AG04450 (cell line): ENCODE measurements at regions of chr11 and their contacts with region 1.

Region 1: GRCh38 chr11:131694526-131695424 is 324.4 kb downstream of the NTM start:
- DNase-seq: peak; percentile 44
- H3K4me3 ChIP-seq: peak overlapping the region; percentile 17; the same call in 1 of the 2 replicates
- H3K27ac ChIP-seq: no peak overlapping the region
- H3K27me3 ChIP-seq: no peaks in the 10 kb centered on the region
- CTCF ChIP-seq: peak; percentile 95

Region 2: GRCh38 chr11:131378931-131379330 is 315.8 kb before region 1 on chr11:
- CTCF ChIA-PET with region 1: no interaction called
- POLR2A ChIA-PET with region 1: no interaction called
- DNase-seq: no peak
- H3K4me3 ChIP-seq: no peak overlapping the region
- H3K27ac ChIP-seq: no peak overlapping the region
- H3K27me3 ChIP-seq: peaks cover 2% of the 10 kb centered on the region
- CTCF ChIP-seq: no peak

Region 3: DNA sequence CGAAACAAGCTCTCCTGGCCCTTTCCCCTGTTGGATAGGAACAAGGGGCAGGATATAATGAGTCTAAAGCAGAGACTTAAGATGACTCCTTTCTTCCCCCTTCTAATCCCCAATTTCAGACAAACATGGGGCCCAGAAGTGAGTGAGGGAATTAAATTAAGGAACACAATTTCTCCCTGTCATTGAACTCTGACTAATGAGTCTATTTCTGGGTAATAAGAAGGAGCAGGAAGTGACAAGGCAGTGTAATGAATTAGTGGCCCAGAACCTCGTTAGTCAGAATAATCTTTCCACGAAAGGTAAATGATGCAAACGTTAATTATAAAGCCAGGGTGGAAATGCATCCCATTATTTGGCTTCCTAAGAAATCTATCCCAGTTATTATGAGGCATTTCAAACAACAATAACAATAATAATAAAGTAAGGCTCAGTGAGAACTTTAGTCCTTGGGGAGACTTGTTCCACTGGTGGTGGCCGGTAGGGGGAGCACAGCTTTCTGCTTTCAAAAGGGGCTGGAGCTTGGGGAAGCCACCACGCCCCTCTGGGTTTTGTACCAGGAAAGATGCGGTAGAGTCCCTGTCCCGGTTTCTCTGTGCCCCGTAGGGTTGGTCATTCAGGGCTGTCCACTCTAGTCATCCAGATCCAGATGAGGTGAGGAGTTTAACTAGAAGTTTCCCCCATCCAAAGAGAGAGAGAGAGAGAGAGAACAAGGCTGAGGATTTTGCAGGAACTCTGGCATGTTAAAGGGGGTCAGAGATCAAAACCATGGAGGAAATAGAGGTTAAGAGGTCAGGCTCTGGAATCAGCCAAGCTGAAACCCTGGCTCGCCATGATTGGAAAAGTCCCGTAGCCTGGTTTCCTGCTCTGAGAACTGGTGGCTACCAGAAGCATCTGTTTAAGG is 26.0 kb before region 1 on chr11:
- CTCF ChIA-PET with region 1: interaction called, 70 read pairs
- POLR2A ChIA-PET with region 1: no interaction called
- DNase-seq: no peak
- H3K4me3 ChIP-seq: no peak overlapping the region
- H3K27ac ChIP-seq: no peak overlapping the region
- H3K27me3 ChIP-seq: no peaks in the 10 kb centered on the region
- CTCF ChIP-seq: peak; percentile 66

Region 4: DNA sequence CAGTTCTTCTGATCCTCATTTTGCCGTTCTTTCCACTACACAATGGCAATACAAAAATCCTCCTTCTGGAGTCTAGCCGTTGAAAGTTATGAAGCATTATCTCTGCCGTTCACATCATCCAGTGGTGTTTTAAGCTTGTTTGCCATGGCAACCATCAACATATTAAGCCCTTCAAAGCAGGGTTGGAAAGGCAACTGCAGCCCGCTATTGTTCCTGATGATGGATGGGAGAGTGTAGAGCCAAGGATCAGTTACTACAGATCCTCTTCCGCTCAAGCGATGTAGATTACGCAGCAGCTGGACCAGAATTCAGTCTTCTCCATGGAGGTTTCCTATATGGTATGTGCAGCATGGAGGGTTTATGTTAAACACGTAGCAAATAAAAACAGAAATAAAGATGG is 28.3 kb after region 1 on chr11:
- CTCF ChIA-PET with region 1: interaction called, 15 read pairs
- POLR2A ChIA-PET with region 1: no interaction called
- DNase-seq: no peak
- H3K4me3 ChIP-seq: no peak overlapping the region
- H3K27ac ChIP-seq: no peak overlapping the region
- H3K27me3 ChIP-seq: peaks cover 23% of the 10 kb centered on the region
- CTCF ChIP-seq: no peak

Region 5: DNA sequence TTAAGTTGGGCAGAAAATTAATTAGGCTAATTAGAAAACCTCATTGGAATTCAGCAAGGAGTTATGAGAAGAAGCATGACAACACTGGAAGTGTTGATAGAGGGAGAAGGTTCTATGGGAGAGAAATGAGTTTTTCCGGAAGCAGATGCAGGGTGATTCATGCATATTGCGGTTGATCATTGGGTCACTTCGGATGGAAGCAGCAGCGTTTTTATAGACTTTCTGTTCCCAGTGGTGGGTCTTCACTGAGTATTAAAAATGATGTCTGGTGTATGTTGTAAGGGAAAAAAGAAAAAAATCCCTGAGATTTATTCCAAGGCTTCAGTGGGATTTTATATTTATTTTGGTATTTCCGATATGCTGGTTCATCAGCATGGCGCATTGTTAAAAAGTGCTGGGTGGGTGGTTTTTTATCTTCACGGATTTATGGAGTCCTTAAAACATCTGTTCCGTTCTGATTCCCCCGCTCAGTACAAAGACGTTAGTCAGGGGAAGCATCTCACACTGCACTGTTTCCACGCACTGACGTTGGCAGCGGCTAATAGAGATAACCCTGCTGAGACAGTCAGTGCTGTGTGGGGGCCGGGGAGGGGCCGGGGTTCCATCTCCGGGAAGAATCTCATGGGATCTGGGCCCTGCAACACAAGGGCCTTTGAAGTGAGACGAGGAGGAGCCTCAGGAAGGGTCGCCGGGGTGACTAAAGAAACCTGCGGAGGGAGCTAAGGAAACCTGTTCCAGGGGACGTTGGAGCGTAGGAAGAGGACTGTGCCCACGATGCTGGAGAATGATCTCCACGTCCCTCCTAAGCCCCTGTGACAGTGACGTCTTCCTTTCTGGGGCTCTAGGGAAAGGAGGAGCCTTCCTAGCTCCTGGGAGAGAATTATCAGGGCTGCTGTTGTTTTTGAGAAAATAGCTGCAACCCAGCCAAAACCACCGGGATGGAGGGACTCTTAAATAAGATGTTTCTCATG is 65.6 kb after region 1 on chr11:
- CTCF ChIA-PET with region 1: interaction called, 28 read pairs
- POLR2A ChIA-PET with region 1: no interaction called
- DNase-seq: no peak
- H3K4me3 ChIP-seq: no peak overlapping the region
- H3K27ac ChIP-seq: peak overlapping the region; percentile 42
- H3K27me3 ChIP-seq: no peaks in the 10 kb centered on the region
- CTCF ChIP-seq: no peak

Region 6: DNA sequence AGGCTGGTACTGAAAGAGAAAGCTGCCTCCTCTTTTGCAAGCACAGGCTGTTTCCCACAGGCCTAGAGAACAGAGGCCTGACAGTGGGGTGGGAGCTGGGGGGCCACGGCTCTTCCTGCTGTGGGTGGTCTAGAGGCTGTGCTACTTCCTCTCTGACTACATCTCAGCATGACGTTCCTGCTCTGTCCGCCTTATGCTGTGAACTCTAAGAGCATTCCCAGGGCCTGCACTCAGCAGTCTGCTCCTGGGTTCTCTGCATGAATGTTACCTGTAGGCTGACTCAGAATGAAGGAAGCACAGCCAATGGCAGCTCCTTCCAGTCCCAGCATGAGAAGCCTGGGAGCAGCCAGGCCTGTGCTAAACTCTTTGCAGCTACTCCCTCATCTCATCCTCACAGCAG is 210.0 kb after region 1 on chr11:
- CTCF ChIA-PET with region 1: interaction called, 19 read pairs
- POLR2A ChIA-PET with region 1: no interaction called
- DNase-seq: no peak
- H3K4me3 ChIP-seq: no peak overlapping the region
- H3K27ac ChIP-seq: no peak overlapping the region
- H3K27me3 ChIP-seq: no peaks in the 10 kb centered on the region
- CTCF ChIP-seq: no peak

Region 7: DNA sequence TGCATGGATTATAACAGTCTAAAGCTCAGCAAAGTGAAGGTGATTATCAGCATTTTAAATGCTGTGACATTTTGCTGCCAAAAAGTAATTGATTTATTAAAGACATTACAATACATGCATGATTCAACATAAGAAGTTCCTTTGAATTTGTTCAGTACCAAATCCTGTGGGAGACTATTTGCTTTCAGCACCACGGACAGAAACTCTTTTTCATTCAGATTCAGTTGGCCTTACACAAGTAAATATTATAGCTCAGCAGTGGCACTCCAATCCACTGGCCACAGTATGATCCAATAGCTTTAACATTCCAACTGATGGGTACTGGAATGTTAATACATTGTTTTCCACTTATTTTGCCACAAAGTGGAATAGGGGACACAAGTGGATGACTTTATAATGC is 482.3 kb after region 1 on chr11:
- CTCF ChIA-PET with region 1: no interaction called
- POLR2A ChIA-PET with region 1: no interaction called
- DNase-seq: peak; percentile 27
- H3K4me3 ChIP-seq: no peak overlapping the region
- H3K27ac ChIP-seq: no peak overlapping the region
- H3K27me3 ChIP-seq: no peaks in the 10 kb centered on the region
- CTCF ChIP-seq: no peak

Region 8: DNA sequence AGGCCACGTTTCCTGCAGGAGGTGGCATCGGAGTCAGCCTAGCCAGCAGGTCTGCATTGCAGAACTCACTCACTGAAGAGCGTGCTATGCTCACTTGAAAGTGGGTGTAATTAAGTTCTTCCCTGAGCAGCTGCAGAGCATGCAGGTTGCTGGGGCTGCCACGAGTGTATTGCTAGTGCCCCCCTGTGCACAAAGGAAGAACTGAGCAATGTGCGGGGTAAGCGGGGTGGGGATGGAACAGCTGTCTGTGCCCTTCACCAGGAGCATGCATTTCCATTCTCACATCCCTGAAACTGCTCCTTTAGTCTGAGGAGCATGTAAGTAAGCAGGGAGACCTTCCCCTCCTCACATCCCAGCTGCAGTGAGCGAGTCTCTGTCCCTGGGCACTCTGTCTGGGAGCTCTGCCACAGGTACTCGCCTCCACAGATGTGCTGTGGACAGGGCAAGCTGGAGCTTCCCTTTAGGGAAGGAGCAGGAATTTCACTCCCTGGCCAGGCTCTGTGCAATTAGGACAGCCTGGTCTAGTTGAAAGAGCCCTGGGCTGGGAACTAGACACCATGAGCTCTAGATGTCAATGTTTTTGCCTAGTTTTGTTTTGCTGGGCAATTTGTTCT is 707.4 kb after region 1 on chr11:
- CTCF ChIA-PET with region 1: interaction called, 17 read pairs
- POLR2A ChIA-PET with region 1: no interaction called
- DNase-seq: peak; percentile 29
- H3K4me3 ChIP-seq: no peak overlapping the region
- H3K27ac ChIP-seq: no peak overlapping the region
- H3K27me3 ChIP-seq: peaks cover 15% of the 10 kb centered on the region
- CTCF ChIP-seq: peak; percentile 68